SK-N-SH (cell line): ENCODE measurements at regions of chr2 and their contacts with region 1.

Region 1: GRCh38 chr2:218710687-218711549 is at the start of gene TTLL4:
- DNase-seq: peak; percentile 99
- H3K4me3 ChIP-seq: peak within 1 kb of the TSS; percentile 74 to 81
- H3K27ac ChIP-seq: peak within 1 kb of the TSS; percentile 74 to 79
- H3K4me1 ChIP-seq: peaks cover 0 to 11% of the 10 kb centered on the region in 2 experiments; a peak in 1 of 4 replicates
- H3K27me3 ChIP-seq: no peaks in the 10 kb centered on the region
- CTCF ChIP-seq: peak; percentile 83
- EP300 ChIP-seq: no peak
- RAD21 ChIP-seq: peak; percentile 59
- polyA plus RNA-seq, gene TTLL4: 15.6 and 18.6 TPM in 2 replicates

Region 2: DNA sequence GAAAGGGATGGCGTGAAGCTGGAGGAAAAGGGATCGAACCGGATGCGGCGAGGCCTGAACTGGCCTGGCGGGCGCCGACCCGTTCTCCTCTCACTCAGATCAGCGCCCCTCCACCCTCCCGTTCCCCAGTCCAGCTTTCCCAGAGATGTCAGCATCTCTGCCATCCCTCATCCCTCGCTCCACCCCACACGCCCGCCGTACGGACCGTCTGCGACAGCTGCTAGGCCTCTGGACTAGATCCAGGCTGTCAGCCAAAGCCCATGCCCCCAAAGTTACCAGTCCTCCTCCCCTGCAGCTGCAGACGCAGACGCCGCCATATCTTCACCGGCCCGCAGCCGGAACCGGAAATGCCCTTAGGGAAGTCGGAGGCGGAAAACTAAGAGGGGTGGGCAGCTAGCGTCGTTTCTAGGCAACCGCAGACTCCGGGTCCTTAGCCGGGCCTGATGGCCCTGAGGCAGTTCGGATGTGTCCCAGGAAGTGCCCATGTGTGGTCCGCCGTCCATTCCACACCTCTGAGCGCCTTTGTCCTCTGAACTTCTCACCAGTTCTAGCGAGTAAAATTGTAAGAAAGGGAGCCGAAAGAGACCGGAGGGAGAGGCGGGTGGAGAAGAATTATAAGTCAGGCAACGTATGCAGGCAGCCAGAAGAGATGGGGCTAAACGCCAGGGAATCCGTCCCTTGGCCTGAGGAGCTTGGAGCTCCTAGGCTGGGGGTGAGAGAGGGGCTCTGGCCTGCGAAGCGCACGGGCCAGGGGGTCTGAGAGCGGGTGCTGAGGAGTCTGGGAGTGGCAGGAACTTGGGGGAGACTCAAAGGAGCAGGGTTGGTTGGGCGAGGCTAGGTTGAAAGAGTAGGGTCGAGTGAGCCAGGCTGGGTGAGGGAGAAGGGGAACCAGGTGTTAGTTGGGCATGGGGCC is 39.0 kb before region 1 on chr2 and contains the starts of genes RNF25 and STK36:
- CTCF ChIA-PET with region 1: interaction called, 11 read pairs
- POLR2A ChIA-PET with region 1: interaction called, 4 read pairs
- DNase-seq: peak; percentile 91
- H3K4me3 ChIP-seq: peak within 1 kb of the TSS; percentile 94 to 97
- H3K27ac ChIP-seq: peak within 1 kb of the TSS; percentile 76 to 94
- H3K4me1 ChIP-seq: peaks cover 8 to 11% of the 10 kb centered on the region in 2 experiments; a peak in 3 of 4 replicates
- H3K27me3 ChIP-seq: no peaks in the 10 kb centered on the region
- CTCF ChIP-seq: no peak
- EP300 ChIP-seq: no peak; a peak in 1 of 4 replicates
- RAD21 ChIP-seq: no peak
- polyA plus RNA-seq, gene RNF25: 72.2 and 90.6 TPM in 2 replicates
- polyA plus RNA-seq, gene STK36: 53.5 and 83.2 TPM in 2 replicates

Region 3: DNA sequence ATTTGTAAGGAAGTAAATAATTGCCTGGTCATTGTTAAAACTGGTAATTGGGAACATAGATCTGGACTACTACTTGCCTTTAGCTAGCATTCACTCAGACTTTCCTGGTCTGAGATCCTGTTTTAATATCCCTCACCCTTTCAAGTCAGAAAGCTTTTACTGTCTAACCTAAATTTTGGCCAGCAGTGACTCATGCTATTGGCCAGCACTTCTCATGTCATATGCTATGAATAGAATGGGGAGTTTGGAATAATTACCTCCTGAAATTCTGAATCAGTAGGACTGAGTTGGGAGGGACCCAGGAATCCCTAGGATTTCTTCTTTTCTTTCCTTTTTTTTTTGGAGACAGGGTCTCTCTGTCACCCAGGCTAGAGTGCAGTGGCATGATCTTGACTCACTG is 19.7 kb before region 1 on chr2:
- CTCF ChIA-PET with region 1: interaction called, 13 read pairs
- POLR2A ChIA-PET with region 1: no interaction called
- DNase-seq: no peak
- H3K4me3 ChIP-seq: no peak overlapping the region
- H3K27ac ChIP-seq: peak overlapping the region in 1 of 2 experiments; percentile 44; a peak in 1 of 4 replicates
- H3K4me1 ChIP-seq: no peaks in the 10 kb centered on the region; a peak in 1 of 4 replicates
- H3K27me3 ChIP-seq: no peaks in the 10 kb centered on the region
- CTCF ChIP-seq: no peak
- EP300 ChIP-seq: no peak
- RAD21 ChIP-seq: no peak

Region 4: DNA sequence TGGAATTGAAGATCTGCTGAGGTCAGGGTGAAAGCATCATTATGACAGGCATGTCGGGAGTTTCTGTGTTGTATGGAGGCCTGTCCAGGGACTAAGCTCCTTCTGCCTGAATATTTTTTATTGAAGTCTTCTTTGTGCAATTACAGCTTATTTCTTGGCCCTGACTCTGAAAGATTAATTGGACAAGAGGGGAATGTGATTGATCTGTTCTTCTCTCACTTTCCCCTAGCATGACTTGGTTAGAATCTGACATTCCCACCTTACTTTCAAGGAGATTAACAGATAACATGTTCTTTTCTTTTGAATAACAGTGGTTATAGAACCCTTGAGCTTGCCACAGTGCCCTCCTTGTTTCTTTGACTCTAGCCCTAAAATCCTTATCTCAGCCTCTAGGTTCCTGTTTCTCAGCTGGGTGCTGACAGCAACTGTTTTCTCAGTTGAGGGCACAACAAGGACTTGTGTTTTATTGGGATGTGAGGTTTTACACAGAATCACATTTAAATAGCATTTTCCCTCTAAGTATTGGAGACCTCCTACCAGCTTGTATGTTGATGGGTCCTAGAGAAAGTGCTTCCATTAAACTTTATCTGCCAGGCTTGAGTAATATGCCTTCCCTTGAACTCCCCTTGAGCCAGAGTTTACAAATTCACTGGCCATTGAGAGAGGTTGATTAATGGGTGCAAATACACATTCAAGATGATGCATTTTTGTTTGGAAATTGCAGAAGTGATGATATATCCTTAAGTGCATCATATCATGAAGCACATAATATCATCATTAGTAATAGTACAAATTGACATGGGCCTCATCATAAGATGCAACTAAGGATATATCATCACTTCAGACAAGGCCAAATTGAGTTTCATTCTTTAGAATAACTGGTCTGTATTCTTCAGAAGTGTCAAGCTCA is 12.2 kb after region 1 on chr2:
- CTCF ChIA-PET with region 1: interaction called, 31 read pairs
- POLR2A ChIA-PET with region 1: no interaction called
- DNase-seq: no peak
- H3K4me3 ChIP-seq: no peak overlapping the region
- H3K27ac ChIP-seq: no peak overlapping the region
- H3K4me1 ChIP-seq: peaks cover 0 to 2% of the 10 kb centered on the region in 2 experiments; a peak in 1 of 4 replicates
- H3K27me3 ChIP-seq: no peaks in the 10 kb centered on the region
- CTCF ChIP-seq: no peak
- EP300 ChIP-seq: no peak
- RAD21 ChIP-seq: no peak

Region 5: DNA sequence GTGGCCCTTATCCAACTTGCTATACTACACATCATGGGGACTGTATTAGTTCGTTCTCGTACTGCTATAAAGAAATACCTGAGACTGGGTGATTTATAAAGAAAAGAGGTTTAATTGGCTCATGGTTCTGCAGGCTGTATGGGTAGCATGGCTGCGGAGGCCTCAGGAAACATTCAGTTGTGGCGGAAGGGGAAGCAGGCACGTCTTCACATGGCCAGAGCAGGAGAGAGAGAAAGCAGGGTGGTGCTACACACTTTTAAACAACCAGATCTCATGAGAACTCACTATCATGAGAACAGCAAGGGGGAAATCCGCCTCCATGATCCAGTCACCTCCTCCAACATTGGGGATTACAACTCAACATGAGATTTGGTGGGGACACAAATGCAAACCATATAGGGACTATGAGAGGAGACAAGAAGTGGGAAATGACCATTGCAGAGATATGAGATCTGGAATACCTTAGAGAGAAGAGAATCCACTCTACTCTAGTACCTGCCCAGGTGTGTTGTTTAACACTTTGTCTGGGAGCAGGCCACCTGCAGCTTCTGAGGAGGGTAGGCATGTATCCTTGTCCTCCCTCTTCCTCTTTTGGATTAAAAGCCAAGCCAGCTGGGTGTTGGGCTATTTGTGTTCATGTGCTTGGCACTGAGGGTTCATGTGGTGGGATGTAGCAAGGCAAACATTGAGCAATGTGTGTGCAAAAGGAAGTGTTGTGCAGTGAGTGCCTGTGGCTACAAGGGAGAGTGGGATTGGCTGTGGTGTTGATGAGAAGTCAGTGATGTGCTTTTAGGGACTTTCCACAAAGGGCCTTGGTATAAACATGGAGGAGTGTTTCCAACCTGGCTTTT is 22.5 kb after region 1 on chr2:
- CTCF ChIA-PET with region 1: interaction called, 15 read pairs
- POLR2A ChIA-PET with region 1: no interaction called
- DNase-seq: no peak
- H3K4me3 ChIP-seq: no peak overlapping the region
- H3K27ac ChIP-seq: peak overlapping the region in 1 of 2 experiments; percentile 98; a peak in 2 of 4 replicates
- H3K4me1 ChIP-seq: peaks cover 0 to 26% of the 10 kb centered on the region in 2 experiments; a peak in 2 of 4 replicates
- H3K27me3 ChIP-seq: no peaks in the 10 kb centered on the region
- CTCF ChIP-seq: no peak
- EP300 ChIP-seq: no peak
- RAD21 ChIP-seq: no peak